ENCODE measurements at regions of chr12 and their contacts with region 1.

Region 1: DNA sequence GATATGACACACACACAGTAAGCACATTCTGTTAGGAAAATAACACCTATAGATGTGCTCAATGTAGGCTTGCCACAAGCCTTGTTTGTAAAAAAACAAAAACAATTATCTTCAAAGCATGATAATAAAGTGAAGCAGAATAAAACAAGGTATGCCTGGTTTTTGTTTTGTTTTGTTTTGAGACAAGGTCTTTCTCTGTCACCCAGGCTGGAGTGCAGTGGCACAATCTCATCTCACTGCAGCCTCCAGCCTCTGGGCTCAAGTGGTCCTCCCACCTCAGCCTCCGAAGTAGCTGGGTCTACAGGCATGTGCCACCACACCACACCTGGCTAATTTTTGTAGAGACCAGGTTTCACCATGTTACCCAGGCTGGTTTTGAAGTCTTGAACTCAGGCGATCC is 52.4 kb upstream of the MON2 start:
- DNase-seq: no peak
- ATAC-seq: no peak
- H3K4me3 ChIP-seq: no peak overlapping the region
- H3K4me3 Mint-ChIP-seq: no peak overlapping the region
- H3K27ac ChIP-seq: no peak overlapping the region
- H3K27ac Mint-ChIP-seq: peak overlapping the region; percentile 1
- H3K4me1 ChIP-seq: no peaks in the 10 kb centered on the region
- H3K4me1 Mint-ChIP-seq: peaks cover 1% of the 10 kb centered on the region
- H3K27me3 ChIP-seq: no peaks in the 10 kb centered on the region
- H3K27me3 Mint-ChIP-seq: peaks cover 1% of the 10 kb centered on the region
- CTCF ChIP-seq: no peak

Region 2: DNA sequence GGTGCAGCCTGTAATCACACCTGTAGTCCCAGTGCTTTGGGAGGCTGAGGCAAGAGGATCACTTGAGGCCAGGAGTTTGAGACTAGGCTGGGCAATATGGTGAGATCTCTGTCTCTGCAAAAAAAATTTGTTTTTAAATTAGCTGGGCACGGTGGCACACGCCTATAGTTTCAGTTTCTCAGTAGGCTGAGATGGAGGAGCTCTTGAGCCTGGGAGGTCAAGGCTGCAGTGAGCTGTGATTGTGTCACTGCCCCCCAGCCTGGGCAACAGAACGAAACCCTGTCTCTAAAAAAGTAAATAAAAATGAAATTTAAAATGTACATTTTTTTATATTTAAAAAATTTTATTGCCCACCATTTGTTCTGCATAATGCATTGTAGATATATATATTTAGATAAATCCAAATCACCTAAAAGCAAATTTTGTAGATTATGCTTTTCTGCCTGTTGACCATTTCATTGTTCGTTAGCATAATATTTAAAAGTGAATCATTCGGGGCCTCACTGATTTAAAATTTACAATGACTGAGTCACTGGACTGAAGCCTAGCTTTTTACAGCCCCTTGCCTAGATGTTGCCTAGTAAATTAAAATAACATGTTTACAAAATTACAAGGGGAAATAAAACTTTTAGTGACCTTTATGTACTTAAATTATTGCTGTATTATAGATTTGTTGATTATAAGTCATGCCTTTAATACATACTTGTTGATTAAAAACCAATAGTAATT is 66.1 kb before region 1 on chr12:
- CTCF ChIA-PET with region 1: no interaction called
- POLR2A ChIA-PET with region 1: no interaction called
- intact Hi-C with region 1: no loop called
- DNase-seq: no peak
- ATAC-seq: no peak
- H3K4me3 ChIP-seq: no peak overlapping the region
- H3K4me3 Mint-ChIP-seq: no peak overlapping the region
- H3K27ac ChIP-seq: no peak overlapping the region
- H3K27ac Mint-ChIP-seq: no peak overlapping the region
- H3K4me1 ChIP-seq: no peaks in the 10 kb centered on the region
- H3K4me1 Mint-ChIP-seq: peaks cover 50% of the 10 kb centered on the region
- H3K27me3 ChIP-seq: no peaks in the 10 kb centered on the region
- H3K27me3 Mint-ChIP-seq: no peaks in the 10 kb centered on the region
- CTCF ChIP-seq: no peak

Region 3: DNA sequence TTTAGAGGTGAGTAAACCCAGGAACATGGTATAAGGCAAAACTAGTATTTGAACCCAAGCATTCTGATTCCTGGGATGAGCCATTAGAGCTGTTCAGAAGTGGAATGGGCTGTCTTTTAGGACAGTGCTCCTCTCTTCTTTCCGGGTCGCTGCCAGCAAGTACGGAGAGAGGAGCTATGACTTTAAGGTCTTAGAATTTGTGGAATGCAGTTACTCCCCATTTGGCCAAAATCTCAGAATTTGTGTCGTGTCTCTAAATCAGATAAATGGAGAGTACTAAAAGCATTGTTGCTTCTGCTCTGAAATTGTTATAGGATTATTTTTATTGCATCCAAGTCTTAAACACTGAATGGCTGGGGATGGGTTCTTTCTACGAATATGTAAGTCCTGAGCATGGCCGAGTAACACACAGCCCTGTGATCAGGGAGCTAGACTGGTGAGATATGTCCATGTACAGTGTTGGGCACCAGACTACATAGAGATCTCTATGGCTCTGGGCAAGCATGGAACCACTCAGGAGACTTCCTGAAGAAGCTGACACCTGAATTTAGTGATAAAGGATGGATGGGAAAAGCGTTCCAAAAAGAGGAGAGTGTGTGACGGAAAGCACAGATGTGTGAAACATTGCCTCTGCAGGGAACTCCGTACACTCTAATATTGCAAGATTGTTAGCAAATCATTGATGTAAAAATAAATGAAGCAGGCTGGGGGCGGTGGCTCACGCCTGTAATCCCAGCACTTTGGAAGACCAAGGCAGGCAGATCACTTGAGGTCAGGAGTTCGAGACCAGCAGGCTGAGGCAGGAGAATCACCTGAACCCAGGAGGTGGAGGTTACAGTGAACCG is 1615.1 kb after region 1 on chr12:
- CTCF ChIA-PET with region 1: no interaction called
- POLR2A ChIA-PET with region 1: no interaction called
- intact Hi-C with region 1: loop called in 1 of 2 experiments (anchors 10 kb)
- DNase-seq: no peak
- ATAC-seq: no peak
- H3K4me3 ChIP-seq: no peak overlapping the region
- H3K4me3 Mint-ChIP-seq: no peak overlapping the region
- H3K27ac ChIP-seq: no peak overlapping the region
- H3K27ac Mint-ChIP-seq: no peak overlapping the region
- H3K4me1 ChIP-seq: no peaks in the 10 kb centered on the region
- H3K4me1 Mint-ChIP-seq: no peaks in the 10 kb centered on the region
- H3K27me3 ChIP-seq: no peaks in the 10 kb centered on the region
- H3K27me3 Mint-ChIP-seq: no peaks in the 10 kb centered on the region
- CTCF ChIP-seq: no peak

Measured in CD4-positive, alpha-beta T cell (primary cell).